CD4-positive, alpha-beta T cell (primary cell): ENCODE measurements at regions of chr6 and their contacts with region 1.

Region 1: DNA sequence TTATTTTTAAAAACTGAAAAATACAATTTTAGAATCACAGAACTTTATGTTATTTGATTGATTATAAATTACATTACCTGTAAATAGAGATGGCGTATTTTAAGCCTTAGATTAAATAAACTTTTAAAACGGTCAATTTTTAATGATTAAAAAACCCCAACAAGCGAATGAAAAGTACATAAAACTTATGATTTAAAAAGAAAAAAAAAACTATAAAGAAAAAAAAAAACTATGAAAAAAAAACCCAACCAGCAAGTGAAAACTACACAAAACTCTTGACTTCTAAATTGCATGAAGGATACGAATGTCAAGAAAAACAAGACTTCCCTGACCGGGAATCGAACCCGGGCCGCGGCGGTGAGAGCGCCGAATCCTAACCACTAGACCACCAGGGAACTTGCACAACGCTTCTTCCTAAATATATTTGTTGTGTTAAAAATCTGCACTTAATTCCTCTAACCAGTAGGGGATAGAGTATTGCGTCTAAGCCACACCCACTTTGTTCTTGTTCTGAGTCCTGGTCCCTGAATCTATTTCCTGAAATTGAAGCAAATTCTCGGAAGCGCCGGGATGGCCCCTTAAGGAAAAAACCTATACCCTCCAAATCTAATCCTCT is 10.7 kb upstream of the NCOA7 start:
- DNase-seq: peak; percentile 72 to 96 (median 82)
- ATAC-seq: peak; percentile 76
- H3K4me3 ChIP-seq: peak overlapping the region; percentile 76
- H3K4me3 Mint-ChIP-seq: no peak overlapping the region
- H3K27ac ChIP-seq: peak overlapping the region; percentile 88 to 93
- H3K27ac Mint-ChIP-seq: no peak overlapping the region
- H3K4me1 ChIP-seq: peaks cover 3% of the 10 kb centered on the region
- H3K4me1 Mint-ChIP-seq: peaks cover 13% of the 10 kb centered on the region
- H3K27me3 ChIP-seq: no peaks in the 10 kb centered on the region
- H3K27me3 Mint-ChIP-seq: no peaks in the 10 kb centered on the region
- CTCF ChIP-seq: no peak

Region 2: GRCh38 chr6:125742466-125743120 is 37.4 kb before region 1 on chr6:
- CTCF ChIA-PET with region 1: no interaction called
- POLR2A ChIA-PET with region 1: interaction called, 7 read pairs
- intact Hi-C with region 1: loop called in 1 of 2 experiments (anchors 5 kb)
- DNase-seq: no peak
- ATAC-seq: no peak
- H3K4me3 ChIP-seq: no peak overlapping the region
- H3K4me3 Mint-ChIP-seq: no peak overlapping the region
- H3K27ac ChIP-seq: no peak overlapping the region
- H3K27ac Mint-ChIP-seq: no peak overlapping the region
- H3K4me1 ChIP-seq: peaks cover 13% of the 10 kb centered on the region
- H3K4me1 Mint-ChIP-seq: peaks cover 14% of the 10 kb centered on the region
- H3K27me3 ChIP-seq: peaks cover 18 to 27% of the 10 kb centered on the region in 2 experiments
- H3K27me3 Mint-ChIP-seq: peaks cover 62% of the 10 kb centered on the region
- CTCF ChIP-seq: no peak

Region 3: GRCh38 chr6:125749173-125749864 is 30.7 kb before region 1 on chr6 and contains the start of gene HEY2:
- CTCF ChIA-PET with region 1: interaction called, 3 read pairs
- POLR2A ChIA-PET with region 1: interaction called, 19 read pairs
- intact Hi-C with region 1: loop called in 1 of 2 experiments (anchors 5 kb)
- DNase-seq: peak; percentile 55 to 92 (median 76)
- ATAC-seq: peak; percentile 63
- H3K4me3 ChIP-seq: peak within 1 kb of the TSS; percentile 67
- H3K4me3 Mint-ChIP-seq: peak within 1 kb of the TSS; percentile 93
- H3K27ac ChIP-seq: no peak within 1 kb of the TSS
- H3K27ac Mint-ChIP-seq: peak within 1 kb of the TSS; percentile 43
- H3K4me1 ChIP-seq: peaks cover 38% of the 10 kb centered on the region
- H3K4me1 Mint-ChIP-seq: peaks cover 38% of the 10 kb centered on the region
- H3K27me3 ChIP-seq: peaks cover 44 to 58% of the 10 kb centered on the region in 2 experiments
- H3K27me3 Mint-ChIP-seq: peaks cover 85% of the 10 kb centered on the region
- CTCF ChIP-seq: peak; percentile 16
- total RNA-seq, gene HEY2: 0.08 to 0.30 TPM

Region 4: GRCh38 chr6:125834348-125834747 is 54.3 kb after region 1 on chr6:
- CTCF ChIA-PET with region 1: interaction called, 3 read pairs
- POLR2A ChIA-PET with region 1: interaction called, 14 read pairs
- intact Hi-C with region 1: no loop called
- DNase-seq: peak in 6 of 14 experiments; percentile 10 to 61 (median 32)
- ATAC-seq: peak; percentile 62
- H3K4me3 ChIP-seq: no peak overlapping the region
- H3K4me3 Mint-ChIP-seq: peak overlapping the region; percentile 8
- H3K27ac ChIP-seq: peak overlapping the region in 1 of 2 donors; percentile 18
- H3K27ac Mint-ChIP-seq: peak overlapping the region; percentile 83
- H3K4me1 ChIP-seq: peaks cover 31% of the 10 kb centered on the region
- H3K4me1 Mint-ChIP-seq: peaks cover 63% of the 10 kb centered on the region
- H3K27me3 ChIP-seq: no peaks in the 10 kb centered on the region
- H3K27me3 Mint-ChIP-seq: no peaks in the 10 kb centered on the region
- CTCF ChIP-seq: no peak

Region 5: GRCh38 chr6:125918681-125919566 is 138.9 kb after region 1 on chr6:
- CTCF ChIA-PET with region 1: no interaction called
- POLR2A ChIA-PET with region 1: interaction called, 10 read pairs
- intact Hi-C with region 1: no loop called
- DNase-seq: peak in 8 of 14 experiments; percentile 5 to 88 (median 26)
- ATAC-seq: peak; percentile 95
- H3K4me3 ChIP-seq: peak overlapping the region; percentile 30
- H3K4me3 Mint-ChIP-seq: peak overlapping the region; percentile 79
- H3K27ac ChIP-seq: peak overlapping the region; percentile 36 to 76
- H3K27ac Mint-ChIP-seq: peak overlapping the region; percentile 84
- H3K4me1 ChIP-seq: peaks cover 13% of the 10 kb centered on the region
- H3K4me1 Mint-ChIP-seq: peaks cover 33% of the 10 kb centered on the region
- H3K27me3 ChIP-seq: no peaks in the 10 kb centered on the region
- H3K27me3 Mint-ChIP-seq: no peaks in the 10 kb centered on the region
- CTCF ChIP-seq: no peak

Region 6: GRCh38 chr6:125974214-125974866 is 194.3 kb after region 1 on chr6:
- CTCF ChIA-PET with region 1: interaction called, 8 read pairs
- POLR2A ChIA-PET with region 1: interaction called, 6 read pairs
- intact Hi-C with region 1: loop called in 1 of 2 experiments (anchors 5 kb)
- DNase-seq: peak in 3 of 14 experiments; percentile 63 to 67 (median 65)
- ATAC-seq: peak; percentile 84
- H3K4me3 ChIP-seq: no peak overlapping the region
- H3K4me3 Mint-ChIP-seq: no peak overlapping the region
- H3K27ac ChIP-seq: no peak overlapping the region
- H3K27ac Mint-ChIP-seq: no peak overlapping the region
- H3K4me1 ChIP-seq: no peaks in the 10 kb centered on the region
- H3K4me1 Mint-ChIP-seq: peaks cover 16% of the 10 kb centered on the region
- H3K27me3 ChIP-seq: no peaks in the 10 kb centered on the region
- H3K27me3 Mint-ChIP-seq: no peaks in the 10 kb centered on the region
- CTCF ChIP-seq: peak; percentile 67

Region 7: DNA sequence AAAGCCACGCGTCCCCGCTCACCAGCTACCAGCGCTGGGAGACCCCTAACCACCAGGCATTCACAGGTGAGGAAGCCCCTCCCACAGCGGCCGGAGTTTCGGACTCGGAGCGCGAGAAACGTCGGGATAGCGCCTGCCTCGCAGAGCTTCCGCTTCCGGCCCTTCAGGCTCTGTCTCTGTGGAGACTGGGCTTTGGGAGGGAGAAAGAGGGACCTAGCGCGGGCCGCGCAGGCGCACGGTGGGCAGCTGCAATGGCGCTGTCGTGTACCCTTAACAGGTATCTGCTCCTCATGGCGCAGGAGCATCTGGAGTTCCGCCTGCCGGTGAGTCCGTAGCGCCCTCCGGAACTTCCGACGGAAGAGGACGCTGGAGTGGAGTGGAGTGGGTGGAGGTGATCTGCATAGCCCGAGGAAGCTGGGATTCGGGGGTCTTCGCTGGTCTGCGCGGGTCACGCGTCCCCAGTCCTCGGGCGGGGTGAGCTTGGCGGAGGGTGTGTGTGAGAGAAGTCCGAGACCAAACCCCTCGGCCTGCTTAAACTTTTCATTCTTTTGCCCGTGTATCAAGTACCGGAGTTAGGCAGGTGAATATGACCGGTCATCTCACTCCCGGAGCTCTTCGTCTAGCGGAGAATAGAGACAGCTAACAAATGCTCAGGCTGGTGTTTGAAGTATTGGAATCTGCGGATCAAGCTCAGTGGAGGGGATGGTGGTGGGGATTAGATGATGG is 206.4 kb after region 1 on chr6 and contains the start of gene TRMT11:
- CTCF ChIA-PET with region 1: interaction called, 4 read pairs
- POLR2A ChIA-PET with region 1: interaction called, 42 read pairs
- intact Hi-C with region 1: no loop called
- DNase-seq: peak; percentile 63 to 92 (median 76)
- ATAC-seq: peak; percentile 95
- H3K4me3 ChIP-seq: peak within 1 kb of the TSS; percentile 89
- H3K4me3 Mint-ChIP-seq: peak within 1 kb of the TSS; percentile 52
- H3K27ac ChIP-seq: peak within 1 kb of the TSS; percentile 54 to 88
- H3K27ac Mint-ChIP-seq: no peak within 1 kb of the TSS
- H3K4me1 ChIP-seq: peaks cover 13% of the 10 kb centered on the region
- H3K4me1 Mint-ChIP-seq: no peaks in the 10 kb centered on the region
- H3K27me3 ChIP-seq: no peaks in the 10 kb centered on the region
- H3K27me3 Mint-ChIP-seq: no peaks in the 10 kb centered on the region
- CTCF ChIP-seq: no peak
- total RNA-seq, gene TRMT11: 21.6 to 22.5 TPM